ENCODE measurements at regions of chr9 and their contacts with region 1.

Region 1: DNA sequence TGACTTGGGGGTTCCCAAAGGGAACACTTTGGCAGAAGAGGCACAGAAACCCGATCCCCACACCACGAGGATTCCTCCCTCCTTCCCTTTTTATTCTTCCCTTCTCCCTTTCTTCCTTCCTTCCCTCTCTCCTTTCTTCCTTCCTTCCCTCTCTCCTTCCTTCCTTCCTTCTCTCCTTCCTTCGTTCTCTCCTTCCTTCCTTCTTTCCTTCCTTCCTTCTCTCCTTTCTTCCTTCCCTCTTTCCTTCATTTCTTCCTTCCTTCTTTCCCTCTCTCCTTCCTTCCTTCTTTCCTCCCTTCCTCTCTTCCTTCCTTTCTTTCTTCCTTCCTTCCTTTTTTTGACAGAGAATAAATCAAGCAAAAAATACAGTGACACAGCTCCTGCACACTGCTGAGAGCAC is 168.0 kb upstream of the NFIL3 start:
- DNase-seq: no peak
- H3K4me3 Mint-ChIP-seq: no peak overlapping the region
- H3K27ac Mint-ChIP-seq: no peak overlapping the region
- H3K4me1 Mint-ChIP-seq: no peaks in the 10 kb centered on the region
- H3K27me3 Mint-ChIP-seq: peaks cover 65% of the 10 kb centered on the region
- CTCF ChIP-seq: no peak

Region 2: DNA sequence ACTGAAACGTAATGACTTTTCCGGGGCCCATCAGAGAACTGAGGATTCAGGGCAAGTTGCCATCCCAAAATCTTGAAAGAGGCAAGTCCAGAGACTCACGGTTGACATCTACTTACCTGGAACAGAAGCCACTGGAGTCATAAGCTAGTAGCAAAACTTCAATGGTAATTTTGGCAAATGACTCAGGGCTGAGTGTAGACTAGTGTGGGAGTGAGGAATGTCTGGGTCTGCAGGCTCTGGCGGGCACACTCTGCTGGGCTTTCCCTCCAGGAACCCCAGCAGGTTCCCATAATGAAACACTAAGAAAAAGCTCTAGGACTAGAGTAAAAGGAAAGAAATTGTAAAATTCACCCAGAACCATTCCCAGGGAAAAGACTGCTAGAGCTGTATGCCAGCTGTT is 45.1 kb before region 1 on chr9:
- CTCF ChIA-PET with region 1: no interaction called
- intact Hi-C with region 1: no loop called
- DNase-seq: no peak
- H3K4me3 Mint-ChIP-seq: no peak overlapping the region
- H3K27ac Mint-ChIP-seq: no peak overlapping the region
- H3K4me1 Mint-ChIP-seq: no peaks in the 10 kb centered on the region
- H3K27me3 Mint-ChIP-seq: no peaks in the 10 kb centered on the region
- CTCF ChIP-seq: no peak

Region 3: GRCh38 chr9:91639054-91639453 is 47.4 kb after region 1 on chr9:
- CTCF ChIA-PET with region 1: interaction called, 11 read pairs
- intact Hi-C with region 1: no loop called
- DNase-seq: no peak
- H3K4me3 Mint-ChIP-seq: no peak overlapping the region
- H3K27ac Mint-ChIP-seq: no peak overlapping the region
- H3K4me1 Mint-ChIP-seq: no peaks in the 10 kb centered on the region
- H3K27me3 Mint-ChIP-seq: peaks cover 34% of the 10 kb centered on the region
- CTCF ChIP-seq: no peak

Region 4: GRCh38 chr9:91655215-91655614 is 63.6 kb after region 1 on chr9:
- CTCF ChIA-PET with region 1: no interaction called
- intact Hi-C with region 1: no loop called
- DNase-seq: no peak
- H3K4me3 Mint-ChIP-seq: no peak overlapping the region
- H3K27ac Mint-ChIP-seq: no peak overlapping the region
- H3K4me1 Mint-ChIP-seq: no peaks in the 10 kb centered on the region
- H3K27me3 Mint-ChIP-seq: peaks cover 35% of the 10 kb centered on the region
- CTCF ChIP-seq: no peak

Region 5: GRCh38 chr9:91750343-91750742 is 158.7 kb after region 1 on chr9:
- CTCF ChIA-PET with region 1: no interaction called
- intact Hi-C with region 1: no loop called
- DNase-seq: no peak
- H3K4me3 Mint-ChIP-seq: no peak overlapping the region
- H3K27ac Mint-ChIP-seq: no peak overlapping the region
- H3K4me1 Mint-ChIP-seq: no peaks in the 10 kb centered on the region
- H3K27me3 Mint-ChIP-seq: peaks cover 15% of the 10 kb centered on the region
- CTCF ChIP-seq: no peak

Measured in Calu3 (cell line).